ENCODE measurements at regions of chr3 and their contacts with region 1.

Region 1: GRCh38 chr3:112979240-112979832 is 4.4 kb upstream of the CD200R1 start:
- DNase-seq: peak; percentile 71
- ATAC-seq: peak; percentile 35
- H3K4me3 ChIP-seq: no peak overlapping the region
- H3K4me3 Mint-ChIP-seq: no peak overlapping the region
- H3K27ac ChIP-seq: no peak overlapping the region
- H3K27ac Mint-ChIP-seq: no peak overlapping the region
- H3K4me1 ChIP-seq: peaks cover 41 to 49% of the 10 kb centered on the region in 2 donors
- H3K4me1 Mint-ChIP-seq: peaks cover 61% of the 10 kb centered on the region
- H3K27me3 ChIP-seq: no peaks in the 10 kb centered on the region
- H3K27me3 Mint-ChIP-seq: no peaks in the 10 kb centered on the region
- CTCF ChIP-seq: peak; percentile 94

Region 2: DNA sequence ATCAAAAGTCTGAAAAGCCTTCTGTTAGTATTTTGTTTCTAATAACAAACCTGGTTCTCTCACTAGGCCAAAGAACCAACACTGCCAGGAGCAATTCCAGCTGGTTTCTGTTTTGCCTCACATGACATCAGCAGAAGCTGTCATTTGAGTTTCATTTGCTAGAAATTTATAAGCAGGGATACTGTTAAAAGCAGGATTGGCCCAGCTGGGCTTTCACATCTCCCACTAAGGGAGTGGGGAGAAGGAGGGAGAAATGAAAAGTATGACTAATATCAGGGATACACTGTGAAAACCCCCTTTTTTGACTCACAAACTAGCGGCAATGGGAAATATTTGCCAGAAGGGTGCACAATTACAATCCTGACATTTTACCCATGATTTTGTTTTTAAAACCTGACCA is 343.7 kb before region 1 on chr3:
- CTCF ChIA-PET with region 1: interaction called, 96 read pairs
- POLR2A ChIA-PET with region 1: no interaction called
- intact Hi-C with region 1: no loop called
- DNase-seq: no peak
- ATAC-seq: no peak
- H3K4me3 ChIP-seq: no peak overlapping the region
- H3K4me3 Mint-ChIP-seq: no peak overlapping the region
- H3K27ac ChIP-seq: no peak overlapping the region
- H3K27ac Mint-ChIP-seq: no peak overlapping the region
- H3K4me1 ChIP-seq: no peaks in the 10 kb centered on the region
- H3K4me1 Mint-ChIP-seq: no peaks in the 10 kb centered on the region
- H3K27me3 ChIP-seq: no peaks in the 10 kb centered on the region
- H3K27me3 Mint-ChIP-seq: no peaks in the 10 kb centered on the region
- CTCF ChIP-seq: no peak

Region 3: GRCh38 chr3:112814266-112814665 is 165.1 kb before region 1 on chr3:
- CTCF ChIA-PET with region 1: interaction called, 12 read pairs
- POLR2A ChIA-PET with region 1: no interaction called
- intact Hi-C with region 1: no loop called
- DNase-seq: peak; percentile 51
- ATAC-seq: no peak
- H3K4me3 ChIP-seq: no peak overlapping the region
- H3K4me3 Mint-ChIP-seq: peak overlapping the region; percentile 66
- H3K27ac ChIP-seq: peak overlapping the region; percentile 15 to 50
- H3K27ac Mint-ChIP-seq: peak overlapping the region; percentile 71
- H3K4me1 ChIP-seq: peaks cover 30 to 42% of the 10 kb centered on the region in 2 donors
- H3K4me1 Mint-ChIP-seq: peaks cover 53% of the 10 kb centered on the region
- H3K27me3 ChIP-seq: no peaks in the 10 kb centered on the region
- H3K27me3 Mint-ChIP-seq: no peaks in the 10 kb centered on the region
- CTCF ChIP-seq: no peak

Region 4: GRCh38 chr3:112908252-112908651 is 71.1 kb before region 1 on chr3:
- CTCF ChIA-PET with region 1: no interaction called
- POLR2A ChIA-PET with region 1: no interaction called
- intact Hi-C with region 1: no loop called
- DNase-seq: peak; percentile 64
- ATAC-seq: peak; percentile 89
- H3K4me3 ChIP-seq: peak overlapping the region in 3 of 5 experiments; percentile 7 to 57 (median 18)
- H3K4me3 Mint-ChIP-seq: peak overlapping the region; percentile 66
- H3K27ac ChIP-seq: peak overlapping the region; percentile 74 to 94
- H3K27ac Mint-ChIP-seq: peak overlapping the region; percentile 71
- H3K4me1 ChIP-seq: peaks cover 48 to 58% of the 10 kb centered on the region in 2 donors
- H3K4me1 Mint-ChIP-seq: peaks cover 62% of the 10 kb centered on the region
- H3K27me3 ChIP-seq: no peaks in the 10 kb centered on the region
- H3K27me3 Mint-ChIP-seq: no peaks in the 10 kb centered on the region
- CTCF ChIP-seq: no peak

Region 5: DNA sequence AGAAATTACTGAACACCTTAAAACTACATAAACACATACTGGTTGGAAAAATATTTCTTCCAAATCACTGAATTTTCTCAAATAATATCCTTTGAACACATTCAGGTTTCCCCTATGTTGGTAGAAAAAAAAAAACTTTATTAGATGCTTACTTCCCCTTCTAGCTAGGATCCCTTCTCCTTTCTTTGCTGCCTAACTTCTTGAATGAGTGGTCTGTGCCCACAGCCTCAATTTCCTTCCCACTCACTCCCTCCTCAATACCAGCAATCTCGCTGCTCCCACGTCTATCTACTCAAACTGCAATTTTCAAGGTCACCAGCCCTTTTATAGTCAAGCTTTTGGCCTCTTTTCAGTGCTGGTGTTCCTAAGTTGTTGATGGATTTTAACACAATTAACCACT is 12.7 kb before region 1 on chr3:
- CTCF ChIA-PET with region 1: interaction called, 22 read pairs
- POLR2A ChIA-PET with region 1: no interaction called
- intact Hi-C with region 1: no loop called
- DNase-seq: no peak
- ATAC-seq: no peak
- H3K4me3 ChIP-seq: no peak overlapping the region
- H3K4me3 Mint-ChIP-seq: no peak overlapping the region
- H3K27ac ChIP-seq: no peak overlapping the region
- H3K27ac Mint-ChIP-seq: peak overlapping the region; percentile 33
- H3K4me1 ChIP-seq: peaks cover 17 to 20% of the 10 kb centered on the region in 2 donors
- H3K4me1 Mint-ChIP-seq: peaks cover 49% of the 10 kb centered on the region
- H3K27me3 ChIP-seq: no peaks in the 10 kb centered on the region
- H3K27me3 Mint-ChIP-seq: no peaks in the 10 kb centered on the region
- CTCF ChIP-seq: no peak

Measured in B cell (primary cell).